Calu3 (cell line): ENCODE measurements at regions of chr10 and their contacts with region 1.

Region 1: GRCh38 chr10:35195361-35196306 is 69.0 kb downstream of the CREM start:
- DNase-seq: peak; percentile 66
- H3K4me3 Mint-ChIP-seq: peak overlapping the region; percentile 70
- H3K27ac Mint-ChIP-seq: peak overlapping the region; percentile 87
- H3K4me1 Mint-ChIP-seq: peaks cover 14% of the 10 kb centered on the region
- H3K27me3 Mint-ChIP-seq: no peaks in the 10 kb centered on the region
- CTCF ChIP-seq: peak; percentile 56

Region 2: DNA sequence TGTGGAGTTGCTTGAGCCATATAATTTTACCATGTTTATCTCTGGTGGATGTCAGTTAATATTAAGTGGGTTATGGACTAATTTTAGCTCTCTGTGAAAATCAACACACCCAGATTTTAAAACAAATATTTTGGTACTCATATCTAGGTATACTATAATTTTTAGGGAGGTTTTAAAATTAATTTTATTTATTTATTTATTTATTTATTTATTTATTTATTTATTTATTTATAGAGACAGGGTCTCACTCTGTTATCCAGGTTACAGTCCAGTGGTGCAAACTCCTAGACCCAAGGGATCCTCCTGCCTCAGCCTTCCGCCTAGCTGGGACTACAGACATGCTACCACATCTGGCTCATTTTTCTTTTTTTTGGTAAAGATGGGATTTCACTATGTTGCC is 76.3 kb before region 1 on chr10:
- CTCF ChIA-PET with region 1: interaction called, 12 read pairs
- intact Hi-C with region 1: no loop called
- DNase-seq: no peak
- H3K4me3 Mint-ChIP-seq: no peak overlapping the region
- H3K27ac Mint-ChIP-seq: no peak overlapping the region
- H3K4me1 Mint-ChIP-seq: no peaks in the 10 kb centered on the region
- H3K27me3 Mint-ChIP-seq: no peaks in the 10 kb centered on the region
- CTCF ChIP-seq: no peak

Region 3: DNA sequence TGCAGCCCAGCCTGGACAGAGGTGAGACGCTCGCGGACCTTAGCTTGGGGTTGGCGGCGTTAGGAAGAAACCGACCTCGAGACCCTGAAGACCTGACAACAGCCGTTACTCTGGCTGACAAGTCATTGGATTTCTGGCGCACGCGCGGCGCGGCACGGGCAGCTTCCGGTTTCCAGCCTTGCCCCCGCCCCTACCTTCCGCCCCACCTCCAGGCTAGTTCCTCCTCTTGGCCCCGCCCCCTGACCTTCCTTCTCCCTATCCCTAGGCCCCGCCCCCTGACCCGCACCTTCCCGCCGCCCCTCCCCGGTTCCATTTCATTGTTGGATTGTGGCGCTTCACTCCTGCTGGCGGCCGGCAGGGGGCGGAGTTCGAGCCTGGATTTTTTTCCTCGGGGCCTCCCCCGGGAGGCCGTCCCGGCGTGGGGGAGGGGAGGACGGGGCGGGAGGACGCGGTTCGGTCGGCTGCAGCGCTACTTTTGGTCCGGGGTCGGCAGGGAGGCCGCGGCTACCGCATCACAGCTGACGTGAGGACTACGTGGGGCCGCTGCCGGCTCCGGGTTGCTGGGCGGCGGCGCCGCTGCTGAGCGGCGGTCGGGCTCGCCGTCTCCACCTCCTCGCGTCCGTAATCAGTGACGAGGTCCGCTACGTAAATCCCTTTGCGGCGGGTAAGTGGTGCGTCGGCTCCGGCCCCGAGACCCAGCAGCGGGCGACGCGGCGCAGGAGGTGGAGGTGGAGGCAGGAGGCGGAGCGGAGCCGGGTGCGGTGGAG is 68.9 kb before region 1 on chr10 and contains the start of gene CREM:
- CTCF ChIA-PET with region 1: interaction called, 37 read pairs
- intact Hi-C with region 1: loop called (anchors 2 kb)
- DNase-seq: peak; percentile 99
- H3K4me3 Mint-ChIP-seq: peak within 1 kb of the TSS; percentile 83
- H3K27ac Mint-ChIP-seq: peak within 1 kb of the TSS; percentile 86
- H3K4me1 Mint-ChIP-seq: no peaks in the 10 kb centered on the region
- H3K27me3 Mint-ChIP-seq: no peaks in the 10 kb centered on the region
- CTCF ChIP-seq: peak; percentile 83
- total RNA-seq, gene CREM: 19.0 and 20.3 TPM in 2 replicates

Region 4: GRCh38 chr10:35218339-35218955 is 22.8 kb after region 1 on chr10:
- CTCF ChIA-PET with region 1: interaction called, 10 read pairs
- intact Hi-C with region 1: no loop called
- DNase-seq: peak; percentile 73
- H3K4me3 Mint-ChIP-seq: no peak overlapping the region
- H3K27ac Mint-ChIP-seq: no peak overlapping the region
- H3K4me1 Mint-ChIP-seq: no peaks in the 10 kb centered on the region
- H3K27me3 Mint-ChIP-seq: no peaks in the 10 kb centered on the region
- CTCF ChIP-seq: no peak